ENCODE measurements at regions of chr17 and their contacts with region 1.

Region 1: DNA sequence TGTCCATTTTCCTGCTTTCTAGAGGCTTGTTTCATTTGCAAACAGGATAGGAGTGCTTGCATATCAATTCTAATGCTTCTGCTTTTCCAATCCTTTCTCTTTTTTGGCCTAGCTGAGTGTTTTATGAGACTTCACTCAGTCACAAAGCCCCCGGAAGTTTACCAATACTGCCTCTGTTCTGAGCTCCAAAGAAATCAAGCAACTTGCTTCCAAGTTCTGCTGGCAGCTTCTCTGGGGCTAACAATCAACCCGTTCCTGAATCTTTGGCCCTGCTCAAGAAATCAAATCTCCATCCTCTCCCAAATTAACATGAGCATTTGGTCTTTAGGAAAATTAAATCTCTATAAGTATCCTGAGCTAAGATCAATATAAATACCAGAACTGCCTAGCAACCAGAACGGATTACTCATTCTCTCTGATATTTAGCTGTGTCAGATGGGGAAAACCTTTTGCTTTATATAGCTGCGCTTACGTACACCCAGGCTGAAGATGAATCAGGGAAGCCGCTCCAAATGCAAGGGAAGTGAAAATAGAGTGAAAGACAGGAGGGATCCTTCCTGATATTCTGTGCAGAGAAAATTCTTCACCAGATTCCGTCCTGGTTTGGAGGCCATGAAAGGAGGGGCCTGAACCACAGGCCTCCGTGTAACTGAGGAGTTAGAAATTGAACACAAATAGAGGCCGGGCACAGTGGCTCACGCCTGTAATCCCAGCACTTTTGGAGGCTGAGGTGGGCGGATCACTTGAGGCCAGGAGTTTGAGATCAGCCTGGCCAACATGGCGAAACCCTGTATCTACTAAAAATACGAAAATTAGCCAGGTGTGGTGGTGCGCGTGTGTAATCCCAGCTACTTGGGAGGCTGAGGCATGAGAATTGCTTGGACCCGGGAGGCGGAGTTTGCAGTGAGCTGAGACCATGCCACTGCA is 23.3 kb upstream of the GRB2 start:
- DNase-seq: peak in 1 of 5 donors; percentile 23
- H3K4me3 ChIP-seq: no peak overlapping the region
- H3K27ac ChIP-seq: peak overlapping the region in 1 of 2 donors; percentile 42
- H3K4me1 ChIP-seq: peaks cover 0 to 5% (median 4%) of the 10 kb centered on the region in 3 donors
- H3K27me3 ChIP-seq: no peaks in the 10 kb centered on the region
- CTCF ChIP-seq: no peak

Region 2: GRCh38 chr17:75261336-75262111 is 167.3 kb before region 1 on chr17 and contains the starts of genes GGA3 and MRPS7:
- intact Hi-C with region 1: no loop called
- DNase-seq: peak; percentile 95 to 98 (median 98)
- H3K4me3 ChIP-seq: peak within 1 kb of the TSS; percentile 96 to 99 (median 97)
- H3K27ac ChIP-seq: peak within 1 kb of the TSS; percentile 99
- H3K4me1 ChIP-seq: peaks cover 5 to 21% (median 5%) of the 10 kb centered on the region in 3 donors
- H3K27me3 ChIP-seq: no peaks in the 10 kb centered on the region
- CTCF ChIP-seq: no peak
- total RNA-seq, gene GGA3: 49.2 TPM
- total RNA-seq, gene MRPS7: 46.4 TPM

Region 3: DNA sequence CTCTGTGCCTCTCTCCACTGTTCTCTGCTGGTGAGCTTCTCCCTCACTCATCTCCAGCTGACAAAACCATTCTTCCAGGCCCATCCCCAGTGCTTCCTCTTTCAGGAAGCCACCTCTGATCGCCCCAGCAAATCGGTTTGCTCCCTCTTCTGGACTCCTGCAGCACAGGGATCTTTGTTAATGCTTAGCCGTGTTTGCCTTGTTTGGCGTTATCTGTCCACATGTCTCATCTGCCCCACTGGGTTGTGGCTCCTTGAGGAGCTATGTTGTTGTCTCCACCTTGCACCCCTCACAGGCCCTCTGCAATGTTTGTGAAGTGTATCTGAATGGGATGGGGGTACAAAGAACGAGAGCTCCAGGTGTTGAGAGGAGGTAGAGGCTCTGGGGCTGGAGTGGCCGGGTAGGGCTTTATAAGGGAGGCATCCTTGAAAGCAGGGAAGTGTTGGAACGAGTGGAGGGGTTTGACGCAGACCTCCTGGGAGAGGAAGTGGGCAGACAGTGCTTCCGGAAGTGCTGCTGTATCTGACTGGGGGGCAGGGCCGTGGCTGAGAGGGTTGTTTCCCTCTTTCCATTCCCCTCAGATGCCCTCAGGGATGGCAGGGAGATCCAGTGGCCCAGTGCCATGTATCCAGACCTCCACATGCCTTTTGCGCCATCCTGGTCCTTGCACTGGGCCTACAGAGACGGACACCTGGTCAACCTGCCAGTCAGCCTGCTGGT is 58.7 kb after region 1 on chr17:
- intact Hi-C with region 1: no loop called
- DNase-seq: no peak
- H3K4me3 ChIP-seq: peak overlapping the region in 1 of 3 donors; percentile 16
- H3K27ac ChIP-seq: peak overlapping the region in 1 of 2 donors; percentile 69
- H3K4me1 ChIP-seq: peaks cover 0 to 39% (median 10%) of the 10 kb centered on the region in 3 donors
- H3K27me3 ChIP-seq: no peaks in the 10 kb centered on the region
- CTCF ChIP-seq: no peak

Region 4: GRCh38 chr17:75504347-75504964 is 75.7 kb after region 1 on chr17:
- intact Hi-C with region 1: loop called (anchors 10 kb)
- DNase-seq: no peak
- H3K4me3 ChIP-seq: no peak overlapping the region
- H3K27ac ChIP-seq: peak overlapping the region in 1 of 2 donors; percentile 41
- H3K4me1 ChIP-seq: peaks cover 0 to 37% (median 14%) of the 10 kb centered on the region in 3 donors
- H3K27me3 ChIP-seq: no peaks in the 10 kb centered on the region
- CTCF ChIP-seq: peak; percentile 43

Region 5: DNA sequence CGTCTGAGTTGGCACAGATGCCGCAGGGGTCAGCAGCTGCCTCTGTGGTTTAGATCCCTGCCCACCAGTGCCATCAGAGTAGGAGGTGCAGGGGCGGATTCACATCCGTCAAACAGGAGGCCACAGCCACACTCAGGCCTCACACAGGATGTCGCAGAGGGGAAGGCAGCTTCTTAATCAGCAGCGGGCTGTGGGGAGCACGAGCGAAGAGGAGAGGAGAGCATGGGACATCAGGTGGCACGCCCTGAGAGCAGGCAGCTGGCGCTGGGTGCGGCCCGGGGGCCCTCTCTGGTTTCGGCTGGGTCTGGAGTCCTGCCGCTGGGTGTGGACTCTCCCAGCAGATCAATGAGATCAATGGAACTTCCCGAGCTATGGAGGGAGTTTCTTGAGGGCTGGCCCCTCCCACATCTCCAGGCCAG is 106.3 kb after region 1 on chr17:
- intact Hi-C with region 1: no loop called
- DNase-seq: no peak
- H3K4me3 ChIP-seq: no peak overlapping the region
- H3K27ac ChIP-seq: no peak overlapping the region
- H3K4me1 ChIP-seq: peaks cover 0 to 30% (median 14%) of the 10 kb centered on the region in 3 donors
- H3K27me3 ChIP-seq: no peaks in the 10 kb centered on the region
- CTCF ChIP-seq: no peak

Measured in kidney (tissue), 22 donors.